Tibial artery (tissue), 4 donors: ENCODE measurements at regions of chr11 and their contacts with region 1.

Region 1: DNA sequence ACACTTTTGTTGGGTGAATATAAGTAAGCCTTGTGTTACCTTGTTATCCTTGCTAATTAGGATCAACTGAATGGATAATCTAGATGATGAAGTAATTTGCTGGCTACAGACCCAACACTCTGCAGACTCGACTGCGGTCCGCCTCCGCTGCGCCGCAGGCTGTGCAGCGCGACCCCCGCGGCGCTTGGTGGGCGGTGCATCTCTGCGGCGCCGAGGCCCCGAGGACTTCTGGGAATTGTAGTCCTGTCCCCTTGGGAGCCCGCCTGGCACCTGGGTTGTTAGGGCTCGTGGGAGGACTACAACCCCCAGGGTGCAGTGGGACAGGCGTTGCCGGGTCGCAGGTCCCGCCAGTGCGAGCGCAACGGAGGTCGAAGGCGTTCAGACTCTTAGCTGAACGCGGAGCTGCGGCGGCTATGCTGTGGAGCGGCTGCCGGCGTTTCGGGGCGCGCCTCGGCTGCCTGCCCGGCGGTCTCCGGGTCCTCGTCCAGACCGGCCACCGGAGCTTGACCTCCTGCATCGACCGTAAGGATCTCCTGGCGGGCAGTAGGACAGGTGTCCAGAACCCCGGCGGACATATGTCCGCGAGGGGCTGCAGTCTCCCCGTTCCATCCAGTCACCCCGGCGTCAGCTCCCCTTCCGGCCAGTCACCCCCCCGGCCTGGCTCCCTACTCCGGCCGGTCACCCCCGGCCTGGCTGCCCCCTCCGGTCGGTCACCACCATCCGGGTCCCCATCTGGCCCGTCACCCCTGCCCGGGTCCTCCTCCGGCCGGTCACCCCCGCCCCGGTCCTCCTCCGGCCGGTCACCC is at the starts of genes ACAD8 and THYN1:
- DNase-seq: peak; percentile 96 to 98
- H3K4me3 ChIP-seq: peak within 1 kb of the TSS; percentile 77 to 97
- H3K27ac ChIP-seq: peak within 1 kb of the TSS; percentile 73 to 74
- H3K4me1 ChIP-seq: peaks cover 0 to 30% (median 22%) of the 10 kb centered on the region in 4 donors
- H3K27me3 ChIP-seq: no peaks in the 10 kb centered on the region
- CTCF ChIP-seq: peak; percentile 34 to 55

Region 2: GRCh38 chr11:133895061-133895479 is 358.3 kb before region 1 on chr11:
- intact Hi-C with region 1: no loop called
- DNase-seq: peak in 1 of 2 donors; percentile 31
- H3K4me3 ChIP-seq: no peak overlapping the region
- H3K27ac ChIP-seq: no peak overlapping the region
- H3K4me1 ChIP-seq: peaks cover 0 to 8% (median 0%) of the 10 kb centered on the region in 4 donors
- H3K27me3 ChIP-seq: no peaks in the 10 kb centered on the region
- CTCF ChIP-seq: no peak

Region 3: GRCh38 chr11:134223836-134224709 is 29.3 kb before region 1 on chr11 and contains the starts of genes NCAPD3 and VPS26B:
- intact Hi-C with region 1: loop called (anchors 2 kb)
- DNase-seq: peak; percentile 96 to 97
- H3K4me3 ChIP-seq: peak within 1 kb of the TSS; percentile 74 to 86
- H3K27ac ChIP-seq: peak within 1 kb of the TSS; percentile 85 to 87
- H3K4me1 ChIP-seq: peaks cover 0 to 40% (median 28%) of the 10 kb centered on the region in 4 donors
- H3K27me3 ChIP-seq: no peaks in the 10 kb centered on the region
- CTCF ChIP-seq: peak in 1 of 2 experiments; percentile 30